Right cardiac atrium (tissue), 5 donors: ENCODE measurements at regions of chr14 and their contacts with region 1.

Region 1: GRCh38 chr14:61475316-61475715 is 153.9 kb downstream of the PRKCH start:
- DNase-seq: no peak
- ATAC-seq: no peak
- H3K4me3 ChIP-seq: no peak overlapping the region
- H3K27ac ChIP-seq: no peak overlapping the region
- H3K4me1 ChIP-seq: peaks cover 30% of the 10 kb centered on the region
- H3K27me3 ChIP-seq: no peaks in the 10 kb centered on the region

Region 2: DNA sequence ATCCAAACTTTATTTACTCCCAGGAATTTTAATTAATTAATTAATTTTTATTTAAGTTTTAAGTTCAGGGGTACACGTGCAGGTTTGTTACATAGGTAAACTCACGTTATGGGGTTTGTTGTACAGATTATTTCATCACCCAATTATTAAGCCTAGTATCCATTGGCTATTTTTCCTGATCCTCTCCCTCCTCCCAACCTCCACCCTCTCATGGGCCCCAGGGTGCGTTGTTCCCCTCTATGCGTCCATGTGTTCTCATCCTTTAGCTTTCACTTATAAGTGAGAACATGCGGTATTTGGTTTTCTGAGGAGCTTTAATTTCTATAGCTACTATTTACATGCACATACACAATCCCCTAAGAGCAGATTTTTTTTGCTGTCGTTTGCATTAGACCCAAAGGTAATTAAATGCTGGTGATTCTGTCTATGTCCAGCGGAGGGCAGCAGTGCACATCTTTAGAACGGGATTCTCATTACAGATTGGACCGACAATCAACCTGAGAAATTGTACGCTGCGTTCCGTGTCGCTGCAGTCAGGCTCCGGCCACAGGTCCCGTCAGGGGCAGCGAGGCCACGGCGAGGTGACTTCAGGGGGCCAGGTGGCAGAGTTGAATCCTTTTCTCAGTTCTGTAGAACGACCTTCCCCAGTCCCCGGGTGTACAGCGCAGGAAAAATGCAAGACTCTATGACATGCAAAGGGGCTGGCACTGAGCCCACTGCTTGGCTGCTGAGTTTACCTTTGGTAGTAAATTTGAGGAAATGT is 205.8 kb before region 1 on chr14:
- intact Hi-C with region 1: no loop called
- DNase-seq: peak; percentile 66 to 87 (median 71)
- ATAC-seq: peak; percentile 78 to 79
- H3K4me3 ChIP-seq: peak overlapping the region; percentile 17
- H3K27ac ChIP-seq: no peak overlapping the region
- H3K4me1 ChIP-seq: no peaks in the 10 kb centered on the region
- H3K27me3 ChIP-seq: no peaks in the 10 kb centered on the region

Region 3: DNA sequence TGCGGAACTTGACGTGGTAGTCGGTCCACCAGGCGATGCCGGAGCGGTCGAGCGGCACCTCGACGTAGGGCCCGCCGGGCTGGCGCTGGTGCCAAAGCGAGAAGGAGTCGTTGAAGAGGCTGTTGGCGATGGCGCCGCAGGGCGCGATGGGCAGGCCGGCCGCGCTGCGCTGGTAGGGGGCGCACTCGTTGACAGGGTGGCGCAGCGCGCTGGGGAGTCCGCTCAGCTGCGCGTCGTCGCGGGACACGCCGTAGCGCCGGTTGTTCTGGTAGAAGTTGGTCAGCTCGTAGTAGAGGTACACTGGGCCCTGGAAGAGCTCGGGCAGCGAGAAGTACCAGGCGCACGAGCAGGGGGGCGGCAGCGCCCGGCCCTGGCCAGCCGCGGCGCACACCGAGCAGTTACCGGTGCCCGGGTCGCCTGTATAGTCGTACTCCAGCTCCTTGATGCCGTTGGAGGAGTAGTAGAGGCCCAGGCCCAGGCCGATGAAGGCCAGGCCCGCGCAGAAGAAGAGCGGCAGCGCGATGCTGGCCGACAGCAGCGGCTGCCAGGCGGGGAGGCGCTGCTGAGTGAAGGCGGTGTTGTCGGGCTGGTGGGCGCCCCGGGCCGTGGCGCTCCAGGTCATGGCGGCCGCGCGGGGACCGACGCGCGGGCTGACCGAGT is 194.7 kb before region 1 on chr14:
- intact Hi-C with region 1: no loop called
- DNase-seq: peak; percentile 75 to 93 (median 88)
- ATAC-seq: peak; percentile 89 to 92
- H3K4me3 ChIP-seq: peak overlapping the region; percentile 57
- H3K27ac ChIP-seq: peak overlapping the region; percentile 40
- H3K4me1 ChIP-seq: no peaks in the 10 kb centered on the region
- H3K27me3 ChIP-seq: no peaks in the 10 kb centered on the region

Region 4: GRCh38 chr14:61438860-61439684 is 36.2 kb before region 1 on chr14:
- intact Hi-C with region 1: no loop called
- DNase-seq: peak; percentile 55 to 80 (median 70)
- ATAC-seq: peak; percentile 87 to 90
- H3K4me3 ChIP-seq: peak overlapping the region; percentile 17
- H3K27ac ChIP-seq: peak overlapping the region; percentile 69
- H3K4me1 ChIP-seq: peaks cover 10% of the 10 kb centered on the region
- H3K27me3 ChIP-seq: no peaks in the 10 kb centered on the region

Region 5: DNA sequence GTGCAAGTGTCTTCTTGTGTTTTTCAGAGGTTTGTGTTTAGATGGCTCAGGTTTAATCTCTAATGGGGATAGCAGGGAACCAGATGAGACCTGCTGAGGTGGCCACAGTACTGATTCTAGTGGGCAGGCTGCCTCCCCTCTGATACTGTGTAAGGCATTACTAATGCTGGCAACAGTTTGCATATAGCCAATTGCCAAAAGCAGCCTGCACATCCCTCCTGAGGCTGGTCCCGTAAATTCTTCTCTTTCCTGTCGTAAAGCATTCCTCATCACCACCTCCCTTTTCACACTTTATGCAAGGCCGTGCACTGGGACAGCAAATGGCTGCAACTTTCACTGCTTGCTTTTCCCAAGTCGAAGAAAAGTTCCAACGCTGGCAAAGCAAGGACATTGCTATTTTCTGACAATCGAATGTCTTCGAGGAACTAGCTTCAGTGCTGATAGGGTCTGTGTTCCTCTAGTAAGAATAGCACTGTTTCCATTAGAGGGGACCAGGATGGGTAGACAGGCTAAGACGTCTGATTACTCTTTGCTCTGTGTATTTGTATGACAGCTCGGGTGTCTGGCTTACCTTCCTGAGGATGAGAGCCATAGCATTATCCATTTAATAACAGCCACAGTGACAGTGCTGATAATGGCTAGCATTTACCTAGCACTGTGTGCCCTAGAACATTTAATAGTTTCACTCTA is 41.8 kb after region 1 on chr14:
- intact Hi-C with region 1: loop called in 3 of 4 experiments (anchors 5 to 10 kb)
- DNase-seq: peak in 1 of 3 donors; percentile 41
- ATAC-seq: peak; percentile 75
- H3K4me3 ChIP-seq: no peak overlapping the region
- H3K27ac ChIP-seq: peak overlapping the region; percentile 16
- H3K4me1 ChIP-seq: peaks cover 14% of the 10 kb centered on the region
- H3K27me3 ChIP-seq: no peaks in the 10 kb centered on the region

Region 6: GRCh38 chr14:61525293-61526011 is 50.1 kb after region 1 on chr14:
- intact Hi-C with region 1: loop called in 2 of 4 experiments (anchors 5 to 10 kb)
- DNase-seq: peak; percentile 69 to 89 (median 84)
- ATAC-seq: peak; percentile 78 to 90
- H3K4me3 ChIP-seq: no peak overlapping the region
- H3K27ac ChIP-seq: peak overlapping the region; percentile 98
- H3K4me1 ChIP-seq: peaks cover 23% of the 10 kb centered on the region
- H3K27me3 ChIP-seq: no peaks in the 10 kb centered on the region

Region 7: GRCh38 chr14:61547186-61548086 is 72.1 kb after region 1 on chr14:
- intact Hi-C with region 1: loop called in 1 of 4 experiments (anchors 10 kb)
- DNase-seq: no peak
- ATAC-seq: no peak
- H3K4me3 ChIP-seq: no peak overlapping the region
- H3K27ac ChIP-seq: peak overlapping the region; percentile 8
- H3K4me1 ChIP-seq: peaks cover 26% of the 10 kb centered on the region
- H3K27me3 ChIP-seq: no peaks in the 10 kb centered on the region

Region 8: GRCh38 chr14:61694830-61695694 is 219.7 kb after region 1 on chr14 and contains the start of gene HIF1A:
- intact Hi-C with region 1: loop called in 1 of 4 experiments (anchors 10 kb)
- DNase-seq: peak; percentile 97 to 99 (median 99)
- ATAC-seq: peak; percentile 98
- H3K4me3 ChIP-seq: peak within 1 kb of the TSS; percentile 71
- H3K27ac ChIP-seq: peak within 1 kb of the TSS; percentile 93
- H3K4me1 ChIP-seq: peaks cover 3% of the 10 kb centered on the region
- H3K27me3 ChIP-seq: no peaks in the 10 kb centered on the region
- total RNA-seq, gene HIF1A: 52.7 to 117 (median 81.1) TPM